IMR-90 (cell line): ENCODE measurements at regions of chr16 and their contacts with region 1.

Region 1: DNA sequence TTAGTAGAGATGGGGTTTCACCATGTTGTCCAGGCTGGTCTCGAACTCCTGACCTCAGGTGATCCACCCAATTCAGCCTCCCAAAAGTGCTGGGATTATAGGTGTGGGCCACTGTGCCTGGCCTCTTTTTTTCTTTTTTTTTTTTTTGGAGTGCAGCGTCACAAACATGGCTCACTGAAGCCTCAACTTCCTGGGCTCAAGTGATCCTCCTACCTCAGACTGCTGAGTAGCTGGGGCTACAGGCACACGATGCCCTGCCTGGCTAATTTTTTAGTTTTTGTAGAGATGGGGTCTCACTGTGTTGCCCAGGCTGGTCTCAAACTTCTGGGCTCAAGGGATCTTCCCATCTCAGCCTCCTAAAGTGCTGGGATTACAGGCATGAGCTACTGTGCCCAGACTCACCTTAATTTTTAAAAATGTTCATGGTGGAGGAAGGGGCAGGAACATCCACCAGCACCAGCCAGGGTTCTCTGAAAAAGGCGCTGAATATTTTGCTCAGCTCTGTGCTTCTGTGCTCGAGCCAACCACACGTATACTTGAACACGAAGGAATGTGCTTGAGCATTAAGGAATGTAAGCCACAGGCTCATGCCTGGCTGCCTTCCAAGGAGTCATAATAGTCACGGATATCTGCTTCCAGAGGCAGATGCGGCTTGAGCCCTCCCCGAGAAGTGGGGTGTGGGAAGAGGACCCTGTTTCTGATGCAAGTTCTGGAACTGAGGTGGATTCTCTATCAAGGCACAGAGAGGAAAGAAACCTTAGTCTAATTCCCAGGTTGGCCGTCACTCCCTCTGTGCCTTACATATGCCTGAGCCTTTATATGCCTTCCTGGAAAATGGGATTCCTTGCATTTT is 65.5 kb upstream of the CREBBP start:
- DNase-seq: peak; percentile 99
- ATAC-seq: peak; percentile 82
- H3K4me3 ChIP-seq: no peak overlapping the region
- H3K27ac ChIP-seq: peak overlapping the region; percentile 80
- H3K4me1 ChIP-seq: peaks cover 21% of the 10 kb centered on the region
- H3K27me3 ChIP-seq: no peaks in the 10 kb centered on the region
- CTCF ChIP-seq: no peak
- POLR2A ChIP-seq: no peak
- RAD21 ChIP-seq: no peak

Region 2: GRCh38 chr16:3690470-3690928 is 255.5 kb before region 1 on chr16:
- CTCF ChIA-PET with region 1: no interaction called
- POLR2A ChIA-PET with region 1: no interaction called
- dilution Hi-C with region 1: no loop called
- in situ Hi-C with region 1: no loop called
- intact Hi-C with region 1: loop called (anchors 5 kb)
- DNase-seq: peak; percentile 94
- ATAC-seq: peak; percentile 98
- H3K4me3 ChIP-seq: no peak overlapping the region
- H3K27ac ChIP-seq: no peak overlapping the region
- H3K4me1 ChIP-seq: peaks cover 6% of the 10 kb centered on the region
- H3K27me3 ChIP-seq: no peaks in the 10 kb centered on the region
- CTCF ChIP-seq: peak; percentile 96
- POLR2A ChIP-seq: no peak
- RAD21 ChIP-seq: peak; percentile 84

Region 3: DNA sequence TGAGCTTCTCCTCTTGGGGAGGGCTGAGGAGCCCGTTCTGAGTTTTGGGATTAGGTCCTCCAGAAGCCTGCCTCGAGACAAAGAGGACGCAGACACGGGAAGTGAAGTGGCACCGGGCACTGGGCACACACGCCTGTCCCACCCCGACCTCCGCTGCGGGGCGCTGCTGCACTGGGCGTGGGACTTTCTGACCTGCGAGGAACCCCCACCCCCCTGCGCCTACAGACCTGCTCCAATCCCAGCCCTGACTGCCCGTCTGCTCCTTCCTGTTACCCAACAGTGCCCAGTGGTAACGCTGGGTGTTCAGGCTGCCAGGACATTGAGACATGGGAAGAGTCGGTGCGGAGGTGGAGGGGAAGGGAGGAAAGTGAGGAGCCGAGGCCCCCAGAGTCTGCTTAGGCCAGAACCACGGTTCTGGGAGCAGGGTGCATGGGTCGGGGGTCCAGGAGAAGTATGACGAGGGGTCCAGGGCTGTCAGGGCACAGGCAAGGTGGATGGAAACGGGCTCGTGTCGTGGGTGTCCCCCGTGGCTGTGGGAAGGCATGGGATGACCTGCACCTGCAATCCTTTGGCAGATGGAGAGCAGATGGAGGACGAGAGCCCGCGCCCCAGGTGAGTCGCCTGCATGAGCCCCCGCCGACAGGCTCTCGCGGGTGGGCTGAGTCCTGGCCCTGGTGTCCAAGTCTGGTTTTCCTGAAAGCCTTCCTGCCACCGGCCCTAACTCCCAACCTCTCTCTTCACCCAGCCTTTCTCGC is 46.5 kb after region 1 on chr16:
- CTCF ChIA-PET with region 1: no interaction called
- POLR2A ChIA-PET with region 1: no interaction called
- dilution Hi-C with region 1: no loop called
- in situ Hi-C with region 1: no loop called
- intact Hi-C with region 1: no loop called
- DNase-seq: no peak
- ATAC-seq: peak; percentile 40; the same call in 1 of the 2 replicates
- H3K4me3 ChIP-seq: no peak overlapping the region
- H3K27ac ChIP-seq: no peak overlapping the region
- H3K4me1 ChIP-seq: no peaks in the 10 kb centered on the region
- H3K27me3 ChIP-seq: no peaks in the 10 kb centered on the region
- CTCF ChIP-seq: no peak
- POLR2A ChIP-seq: no peak
- RAD21 ChIP-seq: no peak